Gastrocnemius medialis (tissue), 4 donors: ENCODE measurements at regions of chr1 and their contacts with region 1.

Region 1: GRCh38 chr1:2525920-2526823 is at the start of gene PANK4:
- DNase-seq: peak; percentile 90 to 91
- ATAC-seq: peak; percentile 75 to 84
- H3K4me3 ChIP-seq: peak within 1 kb of the TSS; percentile 71 to 99 (median 95)
- H3K27ac ChIP-seq: peak within 1 kb of the TSS; percentile 85 to 95 (median 88)
- H3K4me1 ChIP-seq: peaks cover 70 to 72% of the 10 kb centered on the region in 2 donors
- H3K27me3 ChIP-seq: no peaks in the 10 kb centered on the region
- CTCF ChIP-seq: no peak
- POLR2A ChIP-seq: peak; percentile 81 to 82
- total RNA-seq, gene PANK4: 27.5 to 54.2 (median 38.5) TPM

Region 2: DNA sequence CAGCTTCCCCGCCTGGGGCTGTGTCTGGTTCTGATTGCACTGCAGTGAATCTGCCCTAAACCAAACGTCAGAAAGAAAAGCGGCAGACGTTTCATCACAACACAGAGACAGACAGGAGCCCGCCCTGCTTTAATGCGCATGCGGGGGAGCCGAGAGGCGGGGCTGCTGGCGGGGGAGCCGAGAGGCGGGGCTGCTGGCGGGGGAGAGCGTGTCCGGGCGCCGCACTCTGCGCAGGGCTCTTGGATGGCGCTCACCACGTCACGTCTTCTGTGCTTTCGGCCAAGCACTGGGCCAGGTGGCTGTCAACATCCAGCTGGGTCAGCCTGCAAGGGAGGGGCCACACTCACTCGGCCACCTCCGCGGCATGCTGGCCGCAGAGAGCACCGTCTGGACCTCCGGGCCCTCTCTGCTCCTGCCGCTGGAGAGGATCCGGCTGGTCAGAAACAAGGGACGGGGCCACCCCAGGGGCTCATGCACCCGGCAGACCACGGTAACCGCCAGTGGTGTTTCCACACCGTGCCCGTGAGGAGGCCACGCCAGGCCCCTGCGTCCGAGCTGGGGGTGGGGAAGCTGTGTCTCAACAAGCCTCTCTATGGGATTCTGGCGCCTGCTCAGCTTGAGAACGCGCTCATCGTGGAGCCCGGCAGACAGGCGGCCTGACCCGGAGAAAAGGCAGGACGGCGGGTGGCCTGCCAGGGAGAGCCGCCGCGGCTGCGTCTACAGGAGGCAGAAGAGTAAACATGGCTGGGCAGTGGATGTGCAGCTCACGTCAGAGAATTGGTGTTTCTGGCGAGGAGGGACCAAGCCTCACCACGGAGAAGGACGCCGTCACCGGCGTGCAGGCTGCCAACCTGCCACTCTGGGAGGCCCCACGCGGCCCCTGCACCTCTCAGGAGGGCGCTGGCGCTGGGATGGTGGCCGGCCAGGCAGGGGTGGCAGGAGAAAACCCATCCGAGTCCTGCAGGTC is 336.4 kb before region 1 on chr1:
- in situ Hi-C with region 1: no loop called
- intact Hi-C with region 1: loop called (anchors 2 kb)
- DNase-seq: peak; percentile 96 to 97
- ATAC-seq: peak; percentile 93 to 94
- H3K4me3 ChIP-seq: peak overlapping the region; percentile 72 to 88 (median 72)
- H3K27ac ChIP-seq: peak overlapping the region; percentile 97 to 100 (median 98)
- H3K4me1 ChIP-seq: peaks cover 21 to 39% of the 10 kb centered on the region in 2 donors
- H3K27me3 ChIP-seq: no peaks in the 10 kb centered on the region
- CTCF ChIP-seq: peak in 1 of 5 experiments; percentile 18
- POLR2A ChIP-seq: peak; percentile 94 to 96

Region 3: DNA sequence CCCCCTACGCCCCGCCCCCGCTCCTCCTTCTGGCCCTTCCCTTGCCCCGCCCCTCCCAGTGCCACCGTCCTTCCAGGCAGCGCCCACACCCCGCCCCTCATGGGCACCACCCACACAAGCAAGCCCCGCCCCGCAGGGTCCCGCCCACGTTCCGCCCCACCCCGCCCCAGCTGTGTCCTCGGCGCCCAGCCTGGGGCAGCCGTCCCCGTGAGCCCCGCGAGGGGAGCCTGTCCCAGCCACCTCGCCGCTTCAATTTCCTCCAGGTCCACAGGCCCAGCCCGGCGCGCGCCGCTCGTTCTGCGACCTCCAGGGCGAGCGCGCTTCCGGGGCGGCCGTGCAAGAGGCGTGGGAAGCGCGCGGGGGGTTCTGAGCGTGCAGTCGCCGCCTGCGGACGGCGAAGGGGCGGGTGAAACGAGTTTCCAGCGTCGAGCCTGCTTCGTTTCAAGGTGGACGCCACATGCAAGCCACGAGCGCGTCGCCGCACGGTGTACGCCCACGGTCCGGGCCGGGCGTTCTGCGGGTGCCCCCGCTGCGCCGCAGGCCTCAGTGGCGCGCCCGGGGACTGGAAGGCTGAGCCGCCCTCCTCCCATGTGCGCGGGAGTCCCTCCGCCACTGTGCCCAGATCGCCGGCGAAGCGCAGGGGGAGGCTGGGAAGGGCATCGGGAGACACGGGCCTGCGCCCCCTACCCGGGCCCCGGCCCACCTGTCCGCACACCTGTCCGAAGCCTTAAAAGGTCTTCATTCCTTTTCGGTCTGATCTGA is 320.8 kb before region 1 on chr1:
- in situ Hi-C with region 1: loop called in 1 of 4 experiments (anchors 25 kb)
- intact Hi-C with region 1: no loop called
- DNase-seq: peak; percentile 96 to 98
- ATAC-seq: peak; percentile 77 to 83
- H3K4me3 ChIP-seq: peak overlapping the region; percentile 51 to 76 (median 66)
- H3K27ac ChIP-seq: peak overlapping the region; percentile 73 to 88 (median 81)
- H3K4me1 ChIP-seq: peaks cover 12 to 30% of the 10 kb centered on the region in 2 donors
- H3K27me3 ChIP-seq: no peaks in the 10 kb centered on the region
- CTCF ChIP-seq: peak in 3 of 5 experiments; percentile 17 to 35 (median 34)
- POLR2A ChIP-seq: peak; percentile 37 to 44

Region 4: DNA sequence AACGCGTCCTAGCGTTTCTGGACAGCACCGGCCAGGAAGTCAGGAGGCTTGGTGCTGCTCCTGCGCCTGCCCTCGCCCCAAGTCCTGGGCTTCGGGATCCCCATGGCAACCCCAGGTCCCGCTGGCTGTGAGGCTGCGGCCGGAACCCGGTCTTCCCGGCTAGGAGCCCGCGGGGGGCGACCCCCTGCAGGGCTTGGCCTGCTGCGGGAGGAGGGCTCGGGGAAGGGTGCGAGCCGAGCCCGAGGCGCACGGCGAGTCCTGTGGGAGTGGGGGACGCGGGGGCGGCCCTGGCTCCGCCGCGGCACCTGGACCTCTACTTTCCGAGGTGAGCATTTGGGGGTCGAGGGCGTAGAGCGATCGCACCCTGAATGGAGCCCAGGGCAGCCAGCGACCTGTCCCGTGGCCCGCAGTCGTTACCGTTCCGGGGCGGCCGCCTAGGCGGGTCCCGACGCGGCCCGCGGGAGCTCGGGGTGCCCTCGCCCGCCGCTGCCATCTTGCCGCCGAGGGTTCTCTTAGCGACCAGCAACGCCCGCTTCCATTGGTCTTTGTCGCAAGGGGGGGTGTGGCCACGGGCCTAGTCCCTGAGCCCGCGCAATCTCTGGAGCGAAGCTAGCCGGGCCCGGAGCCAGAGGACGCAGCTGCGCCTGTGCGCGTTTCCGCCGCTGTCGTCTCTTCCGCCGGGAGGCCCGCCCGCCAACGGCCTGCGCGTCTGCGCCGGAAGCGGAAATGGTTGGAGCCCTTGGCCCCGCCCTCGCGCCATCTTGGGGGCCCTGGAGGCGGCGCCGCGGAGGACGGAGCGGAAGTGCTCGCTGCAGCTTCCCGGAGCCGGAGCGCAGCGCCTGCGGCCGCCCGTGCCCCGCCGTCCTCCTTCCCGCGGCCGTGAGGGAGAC is 134.9 kb before region 1 on chr1 and contains the starts of genes MORN1 and RER1:
- in situ Hi-C with region 1: no loop called
- intact Hi-C with region 1: loop called (anchors 1 kb)
- DNase-seq: peak; percentile 98
- ATAC-seq: peak; percentile 97 to 99
- H3K4me3 ChIP-seq: peak within 1 kb of the TSS; percentile 77 to 86 (median 84)
- H3K27ac ChIP-seq: peak within 1 kb of the TSS; percentile 67 to 90 (median 85)
- H3K4me1 ChIP-seq: peaks cover 27 to 33% of the 10 kb centered on the region in 2 donors
- H3K27me3 ChIP-seq: no peaks in the 10 kb centered on the region
- CTCF ChIP-seq: no peak
- POLR2A ChIP-seq: peak; percentile 82 to 96
- total RNA-seq, gene MORN1: 1.9 to 4.7 (median 3.5) TPM
- total RNA-seq, gene RER1: 51.1 to 60.5 (median 55.4) TPM

Region 5: DNA sequence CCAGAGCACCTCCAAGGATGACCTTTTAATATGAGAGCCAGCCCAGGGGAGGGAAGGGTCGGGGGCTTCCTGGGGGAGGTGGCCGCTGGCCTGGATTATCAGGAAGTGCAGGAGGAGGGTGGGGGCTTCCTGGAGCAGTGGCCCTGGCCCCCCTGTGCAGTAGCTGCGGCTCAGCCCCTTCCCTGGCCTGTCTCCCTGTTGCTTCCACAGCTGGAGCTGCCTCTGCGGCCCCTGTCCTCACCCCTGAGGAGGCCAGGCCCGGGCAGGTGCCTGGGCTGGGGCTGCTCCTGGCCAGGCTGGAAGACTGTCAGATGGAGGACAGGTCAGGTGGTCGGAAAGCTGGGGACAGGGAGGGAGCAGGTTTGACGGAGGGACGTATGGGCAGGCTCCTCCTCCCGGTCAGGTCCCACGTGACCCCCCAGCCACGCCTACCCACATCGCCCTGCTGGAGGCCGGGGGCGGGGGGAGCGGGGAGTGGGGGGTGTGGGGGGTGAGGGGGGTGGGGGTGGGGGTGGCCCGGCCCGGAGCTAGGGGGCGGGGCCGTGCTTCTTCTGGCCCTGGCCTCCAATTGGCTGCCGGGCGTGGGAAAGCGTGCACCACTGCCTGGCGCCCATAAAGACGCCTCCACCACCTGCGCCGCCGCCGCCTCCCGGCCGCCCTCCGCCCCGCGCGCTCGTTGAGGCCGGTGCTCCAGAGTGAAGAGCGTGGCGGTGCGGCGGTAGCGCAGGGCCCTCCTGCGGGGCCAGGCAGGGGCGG is 19.8 kb after region 1 on chr1:
- in situ Hi-C with region 1: no loop called
- intact Hi-C with region 1: loop called (anchors 2 kb)
- DNase-seq: peak; percentile 73 to 76
- ATAC-seq: peak in 1 of 2 donors; percentile 55
- H3K4me3 ChIP-seq: peak overlapping the region; percentile 53 to 63 (median 56)
- H3K27ac ChIP-seq: peak overlapping the region; percentile 86 to 94 (median 88)
- H3K4me1 ChIP-seq: peaks cover 14 to 35% of the 10 kb centered on the region in 2 donors
- H3K27me3 ChIP-seq: peaks cover 14 to 35% (median 29%) of the 10 kb centered on the region in 3 donors
- CTCF ChIP-seq: no peak
- POLR2A ChIP-seq: peak in 1 of 2 donors; percentile 13

Region 6: DNA sequence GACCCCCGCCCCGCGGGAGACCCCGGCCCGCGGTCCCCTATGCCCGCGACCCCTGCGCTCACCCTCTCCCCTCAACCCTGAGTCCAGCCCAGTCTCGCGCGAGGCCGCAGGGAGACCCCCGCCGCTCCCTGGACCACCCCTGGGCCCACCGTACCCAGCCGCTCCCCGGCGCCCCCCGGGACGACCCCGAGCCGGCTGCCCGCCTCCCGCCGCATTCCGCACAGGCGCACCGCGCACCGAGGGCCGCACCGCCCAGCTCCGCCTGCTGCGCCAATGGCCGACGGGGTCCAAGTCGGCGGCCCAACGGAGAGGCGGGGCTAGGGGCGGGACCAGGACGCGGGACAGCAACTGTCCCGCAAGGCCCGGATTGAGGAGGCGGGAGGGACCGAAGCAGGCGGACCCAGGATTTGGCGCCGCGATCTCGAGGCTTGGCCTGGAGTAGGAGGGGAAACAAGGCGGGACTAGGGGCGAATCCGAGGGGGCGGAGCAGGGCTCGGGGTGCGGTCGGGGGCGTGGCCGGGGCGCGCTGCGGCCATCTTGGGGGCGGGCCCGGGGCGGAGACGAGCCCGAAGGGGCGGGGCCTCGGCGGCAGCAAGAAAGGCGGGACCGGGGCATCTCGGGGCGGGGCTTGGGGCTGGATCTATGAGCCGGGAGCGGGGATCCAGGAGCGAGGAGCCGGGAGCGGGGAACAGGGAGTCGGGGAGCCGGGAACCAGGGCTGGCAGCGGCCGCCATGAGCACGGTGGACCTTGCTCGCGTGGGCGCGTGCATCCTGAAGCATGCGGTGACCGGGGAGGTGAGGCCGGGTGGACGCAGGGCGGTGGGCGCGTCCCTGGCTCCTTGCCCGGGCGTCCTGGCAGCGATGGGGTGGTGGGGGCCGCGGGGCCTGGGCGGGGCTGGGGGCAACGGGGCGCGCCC is 60.2 kb after region 1 on chr1 and contains the start of gene PRXL2B:
- in situ Hi-C with region 1: no loop called
- intact Hi-C with region 1: loop called (anchors 1 kb)
- DNase-seq: peak; percentile 98
- ATAC-seq: peak; percentile 92 to 93
- H3K4me3 ChIP-seq: peak within 1 kb of the TSS; percentile 65 to 92 (median 71)
- H3K27ac ChIP-seq: peak within 1 kb of the TSS; percentile 87 to 97 (median 91)
- H3K4me1 ChIP-seq: peaks cover 11 to 17% of the 10 kb centered on the region in 2 donors
- H3K27me3 ChIP-seq: peaks cover 0 to 8% (median 6%) of the 10 kb centered on the region in 3 donors
- CTCF ChIP-seq: no peak
- POLR2A ChIP-seq: peak; percentile 79 to 83
- total RNA-seq, gene PRXL2B: 0.52 to 2.7 (median 1.1) TPM

Region 7: GRCh38 chr1:2642560-2643413 is 116.6 kb after region 1 on chr1:
- in situ Hi-C with region 1: no loop called
- intact Hi-C with region 1: no loop called
- DNase-seq: peak; percentile 67 to 68
- ATAC-seq: peak; percentile 60 to 71
- H3K4me3 ChIP-seq: peak overlapping the region; percentile 66 to 76 (median 69)
- H3K27ac ChIP-seq: peak overlapping the region; percentile 55 to 81 (median 76)
- H3K4me1 ChIP-seq: peaks cover 0 to 10% of the 10 kb centered on the region in 2 donors
- H3K27me3 ChIP-seq: peaks cover 6 to 18% (median 7%) of the 10 kb centered on the region in 3 donors
- CTCF ChIP-seq: no peak
- POLR2A ChIP-seq: peak; percentile 44 to 45